Psoas muscle (tissue), 8 donors: ENCODE measurements at regions of chr6 and their contacts with region 1.

Region 1: GRCh38 chr6:165884813-165885765 is 222.0 kb upstream of the PDE10A start:
- DNase-seq: peak; percentile 73 to 75
- ATAC-seq: peak; percentile 40 to 81 (median 65)
- H3K4me3 ChIP-seq: no peak overlapping the region
- H3K27ac ChIP-seq: no peak overlapping the region
- H3K4me1 ChIP-seq: no peaks in the 10 kb centered on the region
- H3K27me3 ChIP-seq: no peaks in the 10 kb centered on the region
- CTCF ChIP-seq: peak; percentile 67

Region 2: DNA sequence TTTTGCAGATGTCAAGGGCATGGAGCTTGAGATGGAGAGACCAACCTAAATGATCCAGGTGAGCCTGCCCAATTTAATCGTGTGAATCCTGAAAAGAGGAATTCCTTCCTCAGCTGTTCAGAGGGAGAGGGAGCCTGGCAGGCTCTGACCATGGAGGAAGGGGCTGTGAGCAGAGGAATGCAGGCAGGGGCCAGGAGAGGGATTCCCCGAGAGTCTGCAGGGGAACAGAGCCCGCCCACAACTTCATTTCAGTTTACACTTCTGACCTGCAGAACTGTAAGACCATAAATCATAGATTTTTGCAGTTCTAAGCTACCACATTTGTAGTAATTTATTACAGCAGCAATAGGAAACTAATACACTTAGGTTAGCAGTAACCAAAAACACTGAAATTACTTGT is 118.5 kb after region 1 on chr6:
- intact Hi-C with region 1: loop called in 1 of 2 experiments (anchors 5 kb)
- DNase-seq: no peak
- ATAC-seq: no peak
- H3K4me3 ChIP-seq: no peak overlapping the region
- H3K27ac ChIP-seq: no peak overlapping the region
- H3K4me1 ChIP-seq: no peaks in the 10 kb centered on the region
- H3K27me3 ChIP-seq: peaks cover 0 to 35% (median 17%) of the 10 kb centered on the region in 3 donors
- CTCF ChIP-seq: no peak

Region 3: GRCh38 chr6:166097915-166098522 is 212.9 kb after region 1 on chr6:
- intact Hi-C with region 1: loop called (anchors 2 to 5 kb)
- DNase-seq: peak; percentile 62 to 67
- ATAC-seq: peak in 3 of 4 donors; percentile 61 to 68 (median 67)
- H3K4me3 ChIP-seq: peak overlapping the region; percentile 41
- H3K27ac ChIP-seq: no peak overlapping the region
- H3K4me1 ChIP-seq: no peaks in the 10 kb centered on the region
- H3K27me3 ChIP-seq: peaks cover 0 to 4% (median 0%) of the 10 kb centered on the region in 3 donors
- CTCF ChIP-seq: peak; percentile 65

Region 4: DNA sequence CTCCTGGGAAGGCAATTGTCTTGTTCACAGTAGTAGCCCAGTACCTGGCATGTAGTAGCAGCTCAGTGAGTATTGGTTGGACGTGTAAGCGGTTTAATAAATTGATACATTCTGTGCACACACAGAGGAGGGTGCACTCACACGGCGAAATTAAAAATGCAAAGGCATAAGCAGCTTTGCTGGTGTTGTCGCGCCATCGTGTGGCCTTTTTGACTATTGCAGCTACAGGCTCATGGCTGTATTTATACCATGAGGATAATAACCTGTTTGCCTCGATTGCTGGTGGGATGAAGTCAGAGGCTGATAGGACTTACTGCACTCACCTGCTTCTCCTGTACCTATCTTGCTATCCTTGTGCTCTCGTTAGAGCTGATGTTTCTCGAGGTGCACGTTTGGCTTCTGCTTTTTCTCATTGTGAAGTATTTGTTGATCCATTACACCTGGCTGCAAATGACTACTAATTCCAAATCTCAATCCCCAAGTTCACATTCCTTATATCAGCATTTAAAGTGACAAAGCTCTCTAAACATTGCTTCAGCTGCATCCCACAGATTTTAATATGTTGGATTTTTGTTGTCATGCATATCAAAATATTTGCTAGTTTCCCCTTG is 221.1 kb after region 1 on chr6:
- intact Hi-C with region 1: loop called in 1 of 2 experiments (anchors 5 kb)
- DNase-seq: peak; percentile 68 to 69
- ATAC-seq: peak in 3 of 4 donors; percentile 24 to 49 (median 40)
- H3K4me3 ChIP-seq: no peak overlapping the region
- H3K27ac ChIP-seq: no peak overlapping the region
- H3K4me1 ChIP-seq: no peaks in the 10 kb centered on the region
- H3K27me3 ChIP-seq: no peaks in the 10 kb centered on the region
- CTCF ChIP-seq: peak; percentile 67